ENCODE measurements at regions of chr3 and their contacts with region 1.

Region 1: DNA sequence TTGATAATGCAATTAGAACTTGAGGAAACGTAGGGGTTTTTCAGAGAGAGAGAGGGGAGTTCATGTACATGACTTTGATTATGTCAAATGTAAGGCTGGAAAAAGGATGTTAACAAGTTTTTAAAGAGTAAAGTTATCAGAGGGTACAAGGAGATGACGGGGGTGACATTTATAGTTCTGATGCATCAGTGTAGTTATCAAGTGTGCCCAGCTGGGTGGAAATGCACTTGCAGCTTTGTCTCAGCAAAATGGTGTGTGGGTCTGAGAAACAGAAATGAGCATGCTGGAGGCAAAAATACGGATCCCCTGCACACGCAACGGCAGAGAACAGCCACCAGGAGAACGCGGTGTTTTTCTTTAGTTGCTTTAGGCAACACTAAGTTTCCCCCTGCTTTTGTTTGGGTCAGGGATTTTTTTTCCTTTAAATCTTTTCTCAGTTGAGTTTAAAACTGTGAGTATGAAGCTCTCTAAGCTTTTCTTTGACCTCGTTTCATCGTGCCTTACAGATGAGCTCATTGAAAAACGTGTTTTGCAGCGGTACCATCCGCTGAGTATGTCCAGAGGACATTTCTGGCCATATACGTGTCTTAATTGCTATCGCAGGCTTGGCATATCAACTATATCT is 205.4 kb downstream of the PDZRN3 start:
- DNase-seq: no peak
- ATAC-seq: no peak

Region 2: GRCh38 chr3:73351423-73352071 is 67.7 kb before region 1 on chr3:
- intact Hi-C with region 1: no loop called
- DNase-seq: peak; percentile 75
- ATAC-seq: peak; percentile 85

Region 3: DNA sequence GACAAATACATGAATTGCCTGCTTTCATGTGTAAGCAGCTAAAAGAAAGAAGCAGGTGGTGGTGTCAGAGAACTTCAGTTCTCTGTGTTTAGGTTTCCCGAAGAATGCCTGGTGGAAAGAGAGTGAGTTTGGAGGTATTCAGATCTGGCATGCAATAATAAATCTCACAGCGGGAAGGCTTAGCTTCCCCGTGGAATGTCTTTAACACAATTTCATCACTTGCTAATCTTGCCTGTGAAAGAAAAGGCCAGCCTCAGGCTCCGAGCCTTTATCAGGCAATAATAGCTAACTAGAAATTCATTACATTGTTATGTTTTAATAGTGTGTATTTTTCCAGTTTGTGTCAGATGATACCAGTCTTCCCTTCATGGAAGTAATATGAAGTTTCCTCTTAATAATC is 14.8 kb before region 1 on chr3:
- intact Hi-C with region 1: loop called (anchors 1 kb)
- DNase-seq: no peak
- ATAC-seq: no peak

Measured in Right ventricle myocardium inferior (tissue), 1 donor.